ENCODE measurements at regions of chr18 and their contacts with region 1.

Region 1: GRCh38 chr18:74652392-74652988 is 54.8 kb downstream of the ZNF407 start:
- DNase-seq: peak; percentile 33
- ATAC-seq: peak; percentile 38; the same call in 2 of the 3 replicates
- H3K4me3 ChIP-seq: no peak overlapping the region
- H3K27ac ChIP-seq: no peak overlapping the region
- H3K4me1 ChIP-seq: 0 out of 2 replicates have a peak, but pooled peaks cover 3% of the 10 kb centered on the region
- H3K27me3 ChIP-seq: no peaks in the 10 kb centered on the region
- CTCF ChIP-seq: peak; percentile 64
- EP300 ChIP-seq: no peak
- POLR2A ChIP-seq: no peak
- RAD21 ChIP-seq: peak; percentile 31; the same call in 1 of the 2 replicates

Region 2: DNA sequence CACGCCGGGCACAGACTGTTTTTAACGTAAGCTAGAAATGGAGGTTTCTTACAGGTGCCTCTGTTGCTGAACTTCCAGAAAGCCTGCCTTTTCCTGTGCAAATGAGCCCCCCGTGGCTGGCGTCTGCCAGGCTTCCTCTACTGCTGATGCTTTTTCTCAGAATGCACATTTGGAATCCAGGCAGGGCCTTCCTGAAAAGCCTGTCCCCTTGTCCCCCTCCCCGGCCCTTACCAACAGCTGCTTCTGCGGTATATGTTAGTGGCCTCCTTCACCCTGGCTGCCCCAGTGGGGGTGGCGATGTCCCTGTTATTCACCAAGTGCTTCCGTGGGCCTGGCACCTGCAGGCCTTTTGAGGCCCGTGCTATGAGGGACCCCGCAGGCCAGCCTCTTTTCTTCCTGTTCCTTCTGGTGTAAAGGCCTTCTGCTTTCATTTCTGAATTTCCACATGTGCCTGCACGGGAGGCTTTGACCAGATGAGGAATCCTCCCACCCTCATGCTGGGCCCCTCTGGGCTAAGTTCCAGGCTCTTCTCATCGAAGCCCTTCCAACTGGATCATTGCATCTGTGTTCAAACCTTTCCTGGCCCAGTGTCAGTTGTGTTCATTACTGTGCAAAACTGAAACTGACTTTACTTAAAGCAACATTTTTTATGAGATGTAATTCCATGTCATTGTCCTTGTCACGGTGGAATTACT is 145.9 kb before region 1 on chr18:
- CTCF ChIA-PET with region 1: no interaction called
- POLR2A ChIA-PET with region 1: no interaction called
- in situ Hi-C with region 1: no loop called
- intact Hi-C with region 1: no loop called
- DNase-seq: no peak
- ATAC-seq: no peak
- H3K4me3 ChIP-seq: no peak overlapping the region
- H3K27ac ChIP-seq: no peak overlapping the region
- H3K4me1 ChIP-seq: peaks cover 10% of the 10 kb centered on the region
- H3K27me3 ChIP-seq: no peaks in the 10 kb centered on the region
- CTCF ChIP-seq: no peak
- EP300 ChIP-seq: no peak
- POLR2A ChIP-seq: no peak
- RAD21 ChIP-seq: no peak

Region 3: GRCh38 chr18:74567822-74568221 is 84.7 kb before region 1 on chr18:
- CTCF ChIA-PET with region 1: no interaction called
- POLR2A ChIA-PET with region 1: no interaction called
- in situ Hi-C with region 1: no loop called
- intact Hi-C with region 1: no loop called
- DNase-seq: no peak
- ATAC-seq: no peak
- H3K4me3 ChIP-seq: no peak overlapping the region
- H3K27ac ChIP-seq: no peak overlapping the region
- H3K4me1 ChIP-seq: peaks cover 5% of the 10 kb centered on the region; the same call in 1 of the 2 replicates
- H3K27me3 ChIP-seq: peaks cover 0 to 9% of the 10 kb centered on the region in 2 experiments; a peak in 1 of 5 replicates
- CTCF ChIP-seq: 0 out of 2 replicates have a peak, but pooled peaks have one; percentile 8
- EP300 ChIP-seq: no peak
- POLR2A ChIP-seq: no peak
- RAD21 ChIP-seq: no peak

Region 4: DNA sequence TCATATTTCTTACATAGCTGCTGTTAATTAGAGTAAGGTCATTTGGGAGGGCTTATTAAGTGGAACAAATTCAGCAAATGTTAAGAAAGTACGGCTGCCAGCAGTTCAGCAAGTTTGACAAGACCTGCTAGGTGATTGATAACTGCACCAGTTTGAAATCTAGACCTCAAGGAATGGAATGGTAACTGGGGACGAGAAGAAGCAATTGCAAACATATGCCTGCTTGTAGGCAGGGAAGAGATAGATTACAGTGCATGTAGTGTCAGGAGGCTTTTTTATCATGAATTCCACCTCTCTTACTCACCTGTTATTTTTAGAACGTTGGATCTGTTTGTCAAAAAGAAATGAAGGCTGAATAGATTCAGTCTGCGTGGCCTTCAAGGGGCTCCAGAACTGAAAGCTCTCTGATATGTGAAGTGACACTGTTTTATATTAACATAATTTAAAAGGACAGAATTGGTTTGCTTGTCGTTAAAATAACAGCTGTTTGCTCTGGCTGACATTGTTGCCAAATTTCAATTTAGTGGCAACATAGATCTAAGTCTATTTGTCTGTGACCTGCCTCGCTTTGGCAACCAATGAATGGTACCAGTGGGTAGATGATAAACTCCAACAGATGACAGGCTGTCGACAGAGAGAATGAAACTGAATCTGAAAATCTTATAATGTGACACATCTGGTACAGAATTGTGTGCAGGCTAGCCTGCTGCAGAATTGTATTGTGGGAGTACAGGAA is 144.5 kb after region 1 on chr18:
- CTCF ChIA-PET with region 1: no interaction called
- POLR2A ChIA-PET with region 1: no interaction called
- in situ Hi-C with region 1: no loop called
- intact Hi-C with region 1: no loop called
- DNase-seq: peak; percentile 24
- ATAC-seq: no peak
- H3K4me3 ChIP-seq: no peak overlapping the region
- H3K27ac ChIP-seq: no peak overlapping the region
- H3K4me1 ChIP-seq: no peaks in the 10 kb centered on the region
- H3K27me3 ChIP-seq: no peaks in the 10 kb centered on the region
- CTCF ChIP-seq: no peak
- EP300 ChIP-seq: no peak
- POLR2A ChIP-seq: no peak
- RAD21 ChIP-seq: no peak

Region 5: DNA sequence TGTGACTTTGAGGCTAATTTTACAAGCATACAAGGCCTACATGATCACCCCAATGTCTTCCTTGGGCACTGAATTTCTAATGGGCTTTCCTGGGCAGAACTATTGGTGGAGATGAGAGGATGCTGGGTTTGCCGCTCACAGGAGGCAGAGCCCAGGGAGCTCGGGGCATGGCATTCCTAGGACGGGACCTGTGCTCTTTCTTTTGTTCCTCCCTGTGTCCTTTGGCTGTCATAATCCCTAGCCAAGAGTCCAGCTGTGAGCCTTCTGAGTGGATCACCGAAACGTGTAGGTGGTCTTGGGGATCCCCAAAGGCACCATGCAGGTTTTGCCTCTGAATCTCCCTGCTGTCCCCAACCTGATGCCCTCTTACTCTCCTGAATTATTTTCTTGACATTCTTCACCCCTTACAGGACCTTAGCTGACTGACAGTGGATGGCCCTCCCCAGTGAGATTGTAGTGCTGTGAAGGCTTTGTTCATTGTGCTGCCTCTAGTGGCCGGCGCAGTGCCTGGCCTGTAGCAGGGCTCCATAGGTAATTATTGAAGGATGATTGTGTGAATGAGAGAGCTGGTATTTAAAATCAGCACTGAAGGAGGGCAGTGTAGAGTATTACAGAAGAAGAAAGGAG is 167.1 kb after region 1 on chr18:
- CTCF ChIA-PET with region 1: interaction called, 7 read pairs
- POLR2A ChIA-PET with region 1: no interaction called
- in situ Hi-C with region 1: no loop called
- intact Hi-C with region 1: loop called (anchors 1 kb)
- DNase-seq: peak; percentile 19
- ATAC-seq: peak; percentile 99
- H3K4me3 ChIP-seq: no peak overlapping the region
- H3K27ac ChIP-seq: no peak overlapping the region
- H3K4me1 ChIP-seq: no peaks in the 10 kb centered on the region
- H3K27me3 ChIP-seq: no peaks in the 10 kb centered on the region
- CTCF ChIP-seq: peak; percentile 47; the same call in 1 of the 2 replicates
- EP300 ChIP-seq: peak in 1 of 2 experiments; percentile 59; a peak in 1 of 4 replicates
- POLR2A ChIP-seq: no peak
- RAD21 ChIP-seq: no peak

Region 6: DNA sequence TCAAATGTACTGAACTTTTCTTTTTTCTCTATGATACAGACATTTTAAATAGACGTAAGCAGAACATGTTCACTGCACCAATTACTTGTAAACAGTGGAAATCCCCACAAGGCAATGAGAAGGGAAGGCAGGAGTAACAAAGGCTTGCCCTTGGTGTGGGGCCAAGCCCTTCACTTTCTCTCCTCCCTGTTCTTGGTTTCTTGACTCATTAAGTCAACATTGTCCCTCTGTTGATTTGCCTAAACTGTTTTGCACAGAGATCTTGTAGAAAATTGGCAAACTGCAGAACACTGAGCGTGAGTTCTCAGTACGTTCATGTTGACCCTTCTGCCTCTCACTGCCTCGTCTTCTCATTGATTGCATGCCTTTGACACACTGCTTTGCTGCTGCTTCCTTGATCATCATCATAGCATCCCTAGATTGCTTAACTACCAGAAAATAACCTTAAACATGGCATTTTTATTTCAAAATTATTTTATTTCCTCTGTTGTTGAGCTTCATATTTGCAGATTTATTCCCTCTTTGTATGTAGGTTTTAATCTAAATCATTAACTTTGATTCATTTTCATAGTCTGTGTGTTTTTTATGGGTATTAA is 298.8 kb after region 1 on chr18:
- CTCF ChIA-PET with region 1: no interaction called
- POLR2A ChIA-PET with region 1: no interaction called
- in situ Hi-C with region 1: no loop called
- intact Hi-C with region 1: no loop called
- DNase-seq: peak; percentile 32
- ATAC-seq: no peak; the same call in 2 of the 3 replicates
- H3K4me3 ChIP-seq: no peak overlapping the region
- H3K27ac ChIP-seq: no peak overlapping the region
- H3K4me1 ChIP-seq: peaks cover 7% of the 10 kb centered on the region; the same call in 1 of the 2 replicates
- H3K27me3 ChIP-seq: no peaks in the 10 kb centered on the region
- CTCF ChIP-seq: no peak
- EP300 ChIP-seq: no peak
- POLR2A ChIP-seq: no peak
- RAD21 ChIP-seq: no peak

Region 7: DNA sequence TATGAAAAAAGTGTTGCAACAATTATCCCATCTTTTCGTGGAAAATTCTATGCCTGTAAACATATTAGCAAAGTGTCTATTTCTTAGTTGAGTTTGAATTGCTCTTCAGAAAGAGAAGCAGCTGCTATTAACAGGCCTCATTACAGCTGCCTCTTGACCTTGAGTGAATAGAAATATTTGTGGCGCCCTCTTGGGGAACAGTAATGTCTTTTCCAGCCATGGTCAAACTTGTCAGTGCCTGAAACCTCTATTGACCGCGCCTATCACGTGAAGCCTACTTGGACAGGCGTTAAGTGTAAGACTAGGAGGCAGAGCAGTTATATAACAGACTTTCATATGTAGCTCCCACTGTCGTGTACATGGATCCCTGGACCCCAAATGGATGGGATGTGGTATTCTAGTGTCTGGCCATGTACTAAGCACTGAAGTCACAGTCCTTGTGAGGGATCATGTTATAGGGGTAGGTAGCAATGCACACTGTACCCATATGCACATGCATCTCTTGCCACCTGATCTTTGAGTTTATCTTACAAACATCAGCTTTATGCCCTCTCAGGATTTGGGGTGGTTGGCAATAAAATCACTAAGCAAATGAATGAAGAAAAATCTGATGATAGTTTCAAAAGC is 311.4 kb after region 1 on chr18:
- CTCF ChIA-PET with region 1: interaction called, 4 read pairs
- POLR2A ChIA-PET with region 1: no interaction called
- in situ Hi-C with region 1: no loop called
- intact Hi-C with region 1: loop called (anchors 1 kb)
- DNase-seq: peak; percentile 48
- ATAC-seq: peak; percentile 65
- H3K4me3 ChIP-seq: no peak overlapping the region
- H3K27ac ChIP-seq: no peak overlapping the region
- H3K4me1 ChIP-seq: no peaks in the 10 kb centered on the region
- H3K27me3 ChIP-seq: no peaks in the 10 kb centered on the region
- CTCF ChIP-seq: peak; percentile 51
- EP300 ChIP-seq: no peak
- POLR2A ChIP-seq: no peak
- RAD21 ChIP-seq: no peak

Region 8: GRCh38 chr18:75244351-75245313 is 592.1 kb after region 1 on chr18:
- CTCF ChIA-PET with region 1: no interaction called
- POLR2A ChIA-PET with region 1: no interaction called
- in situ Hi-C with region 1: no loop called
- intact Hi-C with region 1: loop called (anchors 1 kb)
- DNase-seq: peak; percentile 21
- ATAC-seq: peak; percentile 91
- H3K4me3 ChIP-seq: no peak overlapping the region
- H3K27ac ChIP-seq: no peak overlapping the region
- H3K4me1 ChIP-seq: peaks cover 18% of the 10 kb centered on the region
- H3K27me3 ChIP-seq: no peaks in the 10 kb centered on the region
- CTCF ChIP-seq: peak; percentile 72
- EP300 ChIP-seq: no peak
- POLR2A ChIP-seq: no peak
- RAD21 ChIP-seq: peak; percentile 60

Region 9: GRCh38 chr18:76349067-76349715 is 1696.7 kb after region 1 on chr18:
- CTCF ChIA-PET with region 1: no interaction called
- POLR2A ChIA-PET with region 1: no interaction called
- in situ Hi-C with region 1: no loop called
- intact Hi-C with region 1: loop called (anchors 5 kb)
- DNase-seq: peak; percentile 67
- ATAC-seq: peak; percentile 11
- H3K4me3 ChIP-seq: peak overlapping the region; percentile 20 to 69 (median 41); a peak in 5 of 6 replicates
- H3K27ac ChIP-seq: no peak overlapping the region
- H3K4me1 ChIP-seq: peaks cover 49% of the 10 kb centered on the region
- H3K27me3 ChIP-seq: peaks cover 0 to 18% of the 10 kb centered on the region in 2 experiments; a peak in 3 of 5 replicates
- CTCF ChIP-seq: peak; percentile 90
- EP300 ChIP-seq: no peak
- POLR2A ChIP-seq: no peak
- RAD21 ChIP-seq: peak; percentile 58; the same call in 1 of the 2 replicates